OCI-LY7 (cell line): ENCODE measurements at regions of chr2 and their contacts with region 1.

Region 1: DNA sequence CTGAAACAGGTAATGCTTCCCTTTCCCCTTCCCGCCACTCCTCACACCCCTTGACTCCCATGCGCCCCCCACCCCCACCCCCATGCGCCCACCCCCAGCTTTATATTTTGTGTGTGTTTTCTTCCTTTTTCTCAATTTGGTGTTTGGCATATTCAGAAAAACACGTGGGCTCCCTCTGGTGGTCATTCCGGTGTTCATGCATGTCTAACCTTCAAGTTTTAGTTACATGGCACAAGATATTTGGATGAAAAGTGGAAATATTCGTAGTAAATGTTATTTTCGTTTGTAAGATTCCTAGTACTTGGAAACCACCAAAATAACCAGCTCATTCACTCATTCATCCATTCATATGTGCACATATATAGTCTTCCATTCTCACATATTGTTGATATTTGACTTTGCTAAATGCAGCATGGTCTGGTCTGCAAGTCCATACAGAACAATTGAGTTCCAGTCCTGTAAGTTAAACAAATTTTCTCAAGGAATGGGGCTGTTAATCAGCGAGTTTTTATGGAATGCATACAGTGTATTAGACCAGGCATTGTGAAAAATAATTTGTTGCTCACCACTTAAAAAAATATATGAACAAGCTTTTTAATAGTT is 143.6 kb upstream of the MAP3K20 start:
- DNase-seq: peak; percentile 61
- H3K4me3 ChIP-seq: no peak overlapping the region
- H3K27ac ChIP-seq: no peak overlapping the region
- H3K4me1 ChIP-seq: no peaks in the 10 kb centered on the region
- CTCF ChIP-seq: peak; percentile 82

Region 2: DNA sequence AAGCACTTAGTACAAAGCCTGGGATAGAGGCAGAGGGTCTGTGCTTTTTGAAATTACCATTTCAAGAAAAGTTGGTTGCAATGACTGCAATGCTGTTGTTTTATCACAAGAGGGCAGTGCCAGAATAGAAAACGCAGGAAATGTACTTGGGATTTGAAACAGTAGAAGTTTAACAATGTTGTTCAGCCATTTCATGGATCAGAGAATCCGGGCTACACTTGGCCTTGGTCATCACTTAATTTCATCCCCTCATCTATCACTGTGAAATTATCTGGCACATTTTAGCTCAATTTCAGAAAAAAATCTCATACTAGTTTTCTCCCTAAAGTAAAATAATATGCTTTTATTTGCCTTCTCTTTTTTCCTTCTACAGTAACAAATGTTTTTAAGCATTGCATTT is 125.5 kb before region 1 on chr2:
- CTCF ChIA-PET with region 1: no interaction called
- POLR2A ChIA-PET with region 1: no interaction called
- intact Hi-C with region 1: loop called (anchors 1 kb)
- DNase-seq: peak; percentile 44
- H3K4me3 ChIP-seq: no peak overlapping the region
- H3K27ac ChIP-seq: no peak overlapping the region
- H3K4me1 ChIP-seq: no peaks in the 10 kb centered on the region
- CTCF ChIP-seq: peak; percentile 90

Region 3: GRCh38 chr2:172864182-172864581 is 67.8 kb before region 1 on chr2:
- CTCF ChIA-PET with region 1: no interaction called
- POLR2A ChIA-PET with region 1: no interaction called
- intact Hi-C with region 1: loop called (anchors 1 kb)
- DNase-seq: peak; percentile 16
- H3K4me3 ChIP-seq: no peak overlapping the region
- H3K27ac ChIP-seq: no peak overlapping the region
- H3K4me1 ChIP-seq: no peaks in the 10 kb centered on the region
- CTCF ChIP-seq: peak; percentile 67